PC-3 (cell line): ENCODE measurements at regions of chr9 and their contacts with region 1.

Region 1: GRCh38 chr9:95910023-95910707 is 34.7 kb downstream of the ERCC6L2 start:
- DNase-seq: peak; percentile 51
- ATAC-seq: peak; percentile 78
- H3K4me3 ChIP-seq: no peak overlapping the region
- H3K27ac ChIP-seq: no peak overlapping the region
- H3K4me1 ChIP-seq: peaks cover 5% of the 10 kb centered on the region
- H3K27me3 ChIP-seq: no peaks in the 10 kb centered on the region
- CTCF ChIP-seq: no peak

Region 2: DNA sequence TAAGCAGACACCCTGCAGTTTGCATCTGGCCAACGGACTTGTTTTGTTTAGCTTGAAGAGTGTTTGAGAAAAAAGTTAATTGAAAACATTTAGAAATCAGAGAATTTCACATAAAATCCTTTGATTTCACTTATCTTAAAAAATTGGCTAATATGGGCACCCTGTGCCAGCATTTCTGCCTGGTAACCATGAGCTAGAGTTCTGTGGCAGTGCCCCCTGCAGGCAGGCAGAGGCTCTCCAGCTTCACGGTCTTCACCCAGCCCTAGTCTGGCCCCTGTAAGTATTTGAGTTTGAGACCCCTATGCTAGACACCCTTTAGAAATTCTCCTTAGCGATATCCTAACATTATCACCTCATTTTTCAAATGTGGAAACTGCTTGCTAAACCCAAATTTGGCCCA is 573.9 kb before region 1 on chr9:
- CTCF ChIA-PET with region 1: no interaction called
- POLR2A ChIA-PET with region 1: no interaction called
- intact Hi-C with region 1: no loop called
- DNase-seq: no peak
- ATAC-seq: no peak
- H3K4me3 ChIP-seq: no peak overlapping the region
- H3K27ac ChIP-seq: no peak overlapping the region
- H3K4me1 ChIP-seq: no peaks in the 10 kb centered on the region
- H3K27me3 ChIP-seq: no peaks in the 10 kb centered on the region
- CTCF ChIP-seq: peak; percentile 56

Region 3: DNA sequence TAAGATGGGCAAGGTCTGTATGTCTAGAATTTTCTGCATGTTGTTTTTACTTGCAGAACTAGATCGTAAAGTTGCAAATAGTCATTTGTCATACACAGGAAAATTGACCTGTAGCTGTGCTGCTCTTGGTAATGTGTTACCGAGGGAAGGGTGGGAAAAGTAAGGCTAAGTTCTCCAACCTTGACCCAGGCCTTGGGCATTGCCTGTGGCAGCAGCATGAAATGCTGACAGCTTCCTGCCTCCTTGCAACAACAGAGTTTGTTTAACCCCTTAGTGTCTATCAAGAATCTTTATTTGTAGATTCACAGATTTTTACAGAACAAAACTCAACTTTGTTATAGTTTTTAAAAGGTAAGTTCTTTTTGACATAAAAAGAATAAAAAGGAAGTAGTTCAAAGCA is 13.6 kb after region 1 on chr9:
- CTCF ChIA-PET with region 1: no interaction called
- POLR2A ChIA-PET with region 1: interaction called, 11 read pairs
- intact Hi-C with region 1: no loop called
- DNase-seq: peak; percentile 1
- ATAC-seq: no peak
- H3K4me3 ChIP-seq: no peak overlapping the region
- H3K27ac ChIP-seq: no peak overlapping the region
- H3K4me1 ChIP-seq: no peaks in the 10 kb centered on the region
- H3K27me3 ChIP-seq: no peaks in the 10 kb centered on the region
- CTCF ChIP-seq: no peak

Region 4: DNA sequence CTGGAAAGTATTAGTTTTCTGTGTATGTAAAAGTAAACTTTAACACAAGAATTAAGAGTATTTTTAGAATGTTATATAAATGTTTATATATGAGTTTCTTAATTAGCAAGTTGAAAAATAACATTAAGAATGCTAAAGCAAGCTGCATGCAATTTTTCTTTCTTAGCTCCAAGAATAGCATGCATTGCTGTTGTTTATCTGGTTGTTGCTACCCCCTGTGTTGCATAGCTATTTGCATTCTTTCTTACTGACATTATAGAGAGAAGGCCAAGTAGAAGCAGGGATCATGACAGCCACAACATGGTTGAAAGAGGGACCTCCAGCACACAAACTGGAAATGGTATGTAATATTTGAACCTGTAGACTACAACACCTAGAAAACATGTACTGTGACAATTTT is 60.2 kb after region 1 on chr9:
- CTCF ChIA-PET with region 1: no interaction called
- POLR2A ChIA-PET with region 1: no interaction called
- intact Hi-C with region 1: no loop called
- DNase-seq: no peak
- ATAC-seq: no peak
- H3K4me3 ChIP-seq: no peak overlapping the region
- H3K27ac ChIP-seq: no peak overlapping the region
- H3K4me1 ChIP-seq: no peaks in the 10 kb centered on the region
- H3K27me3 ChIP-seq: no peaks in the 10 kb centered on the region
- CTCF ChIP-seq: no peak

Region 5: DNA sequence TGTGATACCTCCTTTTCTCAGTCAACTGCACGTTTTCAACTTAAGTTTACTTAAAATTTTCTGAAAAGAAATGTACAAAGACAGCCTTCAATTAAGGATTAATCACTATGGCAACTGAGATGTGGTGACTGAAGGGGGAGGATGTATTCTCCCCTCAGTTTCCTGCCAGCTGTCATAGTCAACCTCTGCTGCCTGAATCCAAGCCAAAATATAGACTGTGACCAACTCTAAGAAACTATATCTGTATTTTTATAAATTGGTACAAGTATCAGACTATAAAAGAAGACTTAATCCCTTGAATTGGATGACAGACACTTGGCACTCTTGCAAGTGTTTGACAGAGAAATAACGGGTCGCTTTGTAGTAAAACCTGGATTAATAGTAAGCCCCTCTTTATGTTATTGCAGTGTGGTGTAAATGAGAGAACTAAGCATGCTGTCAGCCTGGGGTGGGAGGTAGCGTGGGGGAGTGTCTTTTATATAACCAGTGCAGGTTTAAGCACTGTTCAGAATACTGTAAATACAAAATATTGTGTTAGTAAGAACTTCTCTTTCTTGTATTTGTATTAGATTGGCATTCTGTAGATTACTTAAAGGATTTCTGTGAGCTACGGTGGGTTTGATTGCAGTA is 71.7 kb after region 1 on chr9:
- CTCF ChIA-PET with region 1: no interaction called
- POLR2A ChIA-PET with region 1: no interaction called
- intact Hi-C with region 1: no loop called
- DNase-seq: no peak
- ATAC-seq: no peak
- H3K4me3 ChIP-seq: no peak overlapping the region
- H3K27ac ChIP-seq: no peak overlapping the region
- H3K4me1 ChIP-seq: no peaks in the 10 kb centered on the region
- H3K27me3 ChIP-seq: no peaks in the 10 kb centered on the region
- CTCF ChIP-seq: no peak